Posterior cingulate gyrus (tissue), 11 donors: ENCODE measurements at regions of chr6 and their contacts with region 1.

Region 1: DNA sequence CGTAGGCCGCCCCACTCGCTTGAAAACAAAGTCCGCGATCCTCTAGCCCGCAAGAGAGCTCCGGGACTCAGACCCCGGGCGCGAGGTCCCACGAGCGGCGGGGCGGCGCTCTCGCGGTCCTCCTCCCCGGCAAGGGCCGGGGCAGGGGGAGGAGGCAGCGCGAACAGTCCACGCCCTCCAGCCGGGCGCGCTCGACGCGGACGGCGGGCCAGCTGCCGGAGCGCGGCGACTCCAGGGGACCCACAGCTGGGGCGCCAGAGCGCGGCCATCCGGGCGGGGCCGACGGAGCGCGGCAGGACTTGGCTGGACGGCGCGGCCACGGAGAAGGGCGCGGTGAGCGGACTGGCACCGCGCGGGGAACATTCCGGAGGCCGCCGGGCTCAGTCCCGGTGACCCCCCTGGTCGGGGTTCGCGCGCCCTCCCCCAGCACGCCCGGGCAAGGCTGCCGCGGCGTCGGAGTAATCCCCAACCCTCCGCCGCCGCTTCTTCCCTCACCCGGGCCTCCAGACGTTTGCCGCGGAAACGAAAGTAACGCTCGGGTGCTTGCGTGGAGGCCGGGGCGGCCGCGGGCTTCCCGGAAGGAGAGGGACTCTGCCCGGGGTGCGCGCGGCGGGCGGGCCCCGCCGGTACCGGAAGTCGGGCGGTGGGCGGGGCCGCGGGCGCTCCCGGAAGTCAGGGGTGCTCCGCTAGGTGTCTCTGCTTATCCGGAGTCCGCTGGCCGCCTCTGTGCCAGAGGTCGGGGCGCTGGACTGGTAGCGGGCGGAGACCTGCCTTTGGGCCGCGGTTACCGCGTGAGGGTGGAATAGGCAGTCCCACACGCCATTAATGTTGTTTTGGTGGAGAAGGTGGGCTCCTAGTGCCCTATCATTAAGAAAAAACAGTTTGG is at the start of gene RIPK1:
- DNase-seq: peak; percentile 88 to 99 (median 92)

Region 2: DNA sequence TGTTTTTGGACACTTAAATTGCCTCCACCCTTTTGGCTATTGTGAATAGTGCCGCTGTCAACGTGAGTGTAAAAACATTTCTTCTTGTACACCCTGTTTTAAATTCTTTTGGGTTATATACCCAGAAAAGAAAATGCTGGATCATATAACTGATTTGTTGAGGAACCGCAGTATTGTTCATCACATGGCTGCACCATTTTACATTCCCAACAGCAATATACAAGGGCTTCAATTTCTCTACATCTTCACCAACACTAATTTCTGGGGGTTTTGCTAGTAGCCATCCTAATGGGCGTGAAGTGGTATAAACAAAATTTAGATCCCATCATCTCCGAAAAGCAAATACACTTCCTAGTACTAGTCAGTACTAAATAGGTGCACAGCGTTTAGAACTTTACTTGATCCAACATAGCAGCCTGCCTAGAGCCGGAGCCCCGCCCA is 49.4 kb after region 1 on chr6:
- intact Hi-C with region 1: loop called (anchors 2 kb)
- DNase-seq: no peak

Region 3: GRCh38 chr6:3258720-3259490 is 190.3 kb after region 1 on chr6 and contains the start of gene PSMG4:
- intact Hi-C with region 1: loop called (anchors 5 kb)
- DNase-seq: peak; percentile 88 to 99 (median 94)